Activated B cell treated with CpG ODN at 0.5 μM for 24 hours (primary cell): ENCODE measurements at regions of chr6 and their contacts with region 1.

Region 1: DNA sequence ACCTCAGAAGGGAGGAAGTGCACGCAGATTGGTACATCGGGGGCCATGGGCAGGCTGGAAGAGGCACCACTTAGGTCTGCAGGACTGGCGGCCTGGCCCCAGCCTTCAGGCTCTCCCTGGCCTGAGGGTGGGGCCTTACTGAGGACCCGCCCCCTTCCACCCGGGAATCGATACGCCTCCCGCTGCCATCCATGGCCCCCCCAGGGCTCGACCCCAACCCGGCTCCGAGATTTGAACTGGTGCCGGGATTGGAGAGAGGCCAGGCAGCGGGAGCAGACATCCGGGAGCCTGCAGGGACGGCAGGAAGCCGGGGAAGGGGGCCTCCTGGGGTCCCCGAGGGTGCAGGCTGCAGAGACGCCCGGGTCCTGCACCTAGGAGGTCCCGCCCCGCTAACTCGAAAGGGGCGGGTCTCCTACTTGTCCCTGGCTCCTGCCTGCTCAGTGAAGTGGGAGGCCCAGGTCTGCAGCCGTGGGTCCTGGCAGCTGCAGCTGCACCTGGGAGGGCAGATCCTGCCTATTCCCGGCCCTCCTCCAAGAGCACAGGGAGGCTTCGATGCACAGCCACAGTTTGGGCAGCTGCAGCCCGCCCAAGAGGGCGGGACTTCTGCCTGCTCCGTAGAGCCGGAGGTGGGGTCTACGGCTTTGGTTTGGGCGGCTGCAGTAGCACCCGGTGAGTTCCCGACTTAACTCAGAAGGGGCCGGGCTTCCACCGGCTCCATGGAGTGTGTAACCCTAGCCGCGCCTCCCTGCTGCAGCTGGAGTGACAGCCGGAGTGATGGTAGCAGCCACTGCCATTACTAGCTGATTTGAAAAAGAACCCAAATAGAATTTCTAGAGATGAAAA is 35.2 kb upstream of the TBC1D22B start:
- DNase-seq: peak; percentile 61
- ATAC-seq: peak; percentile 94
- H3K4me3 Mint-ChIP-seq: peak overlapping the region; percentile 82
- H3K27ac Mint-ChIP-seq: no peak overlapping the region
- H3K4me1 Mint-ChIP-seq: peaks cover 10% of the 10 kb centered on the region
- H3K27me3 Mint-ChIP-seq: no peaks in the 10 kb centered on the region
- CTCF ChIP-seq: no peak

Region 2: GRCh38 chr6:37257634-37258404 is 35.5 kb after region 1 on chr6 and contains the starts of genes TBC1D22B and TMEM217:
- CTCF ChIA-PET with region 1: no interaction called
- POLR2A ChIA-PET with region 1: no interaction called
- intact Hi-C with region 1: loop called (anchors 2 kb)
- DNase-seq: peak; percentile 90
- ATAC-seq: peak; percentile 100
- H3K4me3 Mint-ChIP-seq: peak within 1 kb of the TSS; percentile 96
- H3K27ac Mint-ChIP-seq: peak within 1 kb of the TSS; percentile 88
- H3K4me1 Mint-ChIP-seq: peaks cover 38% of the 10 kb centered on the region
- H3K27me3 Mint-ChIP-seq: no peaks in the 10 kb centered on the region
- CTCF ChIP-seq: no peak
- total RNA-seq, gene TBC1D22B: 10.7 and 11.1 TPM in 2 replicates
- total RNA-seq, gene TMEM217: 0.54 and 1.0 TPM in 2 replicates